Activated CD4-positive, alpha-beta T cell treated with anti-CD3 and anti-CD28 coated beads, Interleukin-2, amount 10 ng/mL, durations not matched to agents 24 days and 14 days (primary cell): ENCODE measurements at regions of chr2 and their contacts with region 1.

Region 1: GRCh38 chr2:9594366-9595054 is 36.3 kb downstream of the YWHAQ start:
- DNase-seq: no peak
- H3K4me3 Mint-ChIP-seq: peak overlapping the region; percentile 22
- H3K27ac Mint-ChIP-seq: peak overlapping the region; percentile 81
- H3K4me1 Mint-ChIP-seq: peaks cover 52% of the 10 kb centered on the region
- H3K27me3 Mint-ChIP-seq: no peaks in the 10 kb centered on the region

Region 2: DNA sequence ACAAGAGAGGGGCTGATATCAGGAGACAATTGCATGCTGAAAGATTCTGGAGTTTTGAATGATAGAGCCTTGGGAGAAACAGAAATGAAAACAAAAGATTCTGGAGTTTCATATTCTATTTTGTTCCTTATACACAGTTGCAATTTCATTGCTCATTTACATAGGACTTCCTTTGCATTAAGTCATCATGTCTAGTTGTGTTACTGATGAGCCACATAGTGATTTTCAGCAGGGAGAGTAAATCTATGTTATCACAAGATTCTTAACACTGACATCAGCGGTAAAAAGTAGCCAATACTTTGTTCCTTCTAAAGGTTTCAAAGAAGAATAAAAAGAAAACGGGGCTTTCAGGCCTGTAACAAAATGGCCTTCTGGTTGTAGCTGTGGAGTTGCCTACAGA is 46.0 kb before region 1 on chr2:
- intact Hi-C with region 1: loop called (anchors 1 kb)
- DNase-seq: no peak
- H3K4me3 Mint-ChIP-seq: peak overlapping the region; percentile 54
- H3K27ac Mint-ChIP-seq: peak overlapping the region; percentile 58
- H3K4me1 Mint-ChIP-seq: peaks cover 58% of the 10 kb centered on the region
- H3K27me3 Mint-ChIP-seq: no peaks in the 10 kb centered on the region

Region 3: DNA sequence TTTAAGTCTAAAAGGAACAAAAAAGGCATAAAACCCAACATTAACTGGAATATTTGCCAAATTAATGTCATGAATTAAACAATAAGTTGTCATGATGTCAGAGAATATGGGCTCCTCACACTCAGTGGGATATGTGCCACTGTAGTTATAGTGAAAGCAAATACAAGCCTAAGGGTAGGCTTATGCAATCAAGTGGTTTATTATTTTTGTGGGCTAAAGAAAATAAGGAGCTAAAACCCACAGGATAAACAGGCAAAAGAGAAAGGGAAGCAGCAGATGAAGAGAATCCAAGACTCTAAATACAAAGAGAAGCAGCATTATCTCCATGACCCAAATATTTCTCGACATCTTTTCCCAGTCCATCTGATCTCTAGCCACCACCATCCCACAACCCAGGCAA is 18.8 kb after region 1 on chr2:
- intact Hi-C with region 1: loop called (anchors 1 kb)
- DNase-seq: no peak
- H3K4me3 Mint-ChIP-seq: no peak overlapping the region
- H3K27ac Mint-ChIP-seq: no peak overlapping the region
- H3K4me1 Mint-ChIP-seq: peaks cover 77% of the 10 kb centered on the region
- H3K27me3 Mint-ChIP-seq: no peaks in the 10 kb centered on the region

Region 4: DNA sequence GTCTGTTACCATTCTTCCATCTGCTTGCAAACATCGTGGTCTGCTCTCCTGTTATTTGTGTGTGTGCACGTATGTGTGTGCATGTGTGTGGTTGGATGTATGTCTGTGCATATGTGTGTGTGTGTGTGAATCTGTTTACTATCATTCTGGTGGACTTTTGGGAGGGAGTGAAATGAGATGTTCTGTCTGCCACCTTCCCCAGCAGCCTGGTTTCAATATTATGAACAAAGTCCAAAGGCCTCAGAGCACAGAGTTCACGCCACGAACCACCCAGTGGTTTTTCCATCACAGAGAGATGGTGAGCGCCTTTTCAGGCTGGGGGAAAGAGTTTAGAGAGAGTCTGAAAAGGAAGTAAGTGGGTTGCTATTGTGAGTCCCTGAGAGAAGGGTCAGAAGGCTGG is 103.4 kb after region 1 on chr2:
- intact Hi-C with region 1: loop called (anchors 1 kb)
- DNase-seq: peak; percentile 67
- H3K4me3 Mint-ChIP-seq: peak overlapping the region; percentile 27
- H3K27ac Mint-ChIP-seq: peak overlapping the region; percentile 27
- H3K4me1 Mint-ChIP-seq: peaks cover 31% of the 10 kb centered on the region
- H3K27me3 Mint-ChIP-seq: peaks cover 2% of the 10 kb centered on the region

Region 5: DNA sequence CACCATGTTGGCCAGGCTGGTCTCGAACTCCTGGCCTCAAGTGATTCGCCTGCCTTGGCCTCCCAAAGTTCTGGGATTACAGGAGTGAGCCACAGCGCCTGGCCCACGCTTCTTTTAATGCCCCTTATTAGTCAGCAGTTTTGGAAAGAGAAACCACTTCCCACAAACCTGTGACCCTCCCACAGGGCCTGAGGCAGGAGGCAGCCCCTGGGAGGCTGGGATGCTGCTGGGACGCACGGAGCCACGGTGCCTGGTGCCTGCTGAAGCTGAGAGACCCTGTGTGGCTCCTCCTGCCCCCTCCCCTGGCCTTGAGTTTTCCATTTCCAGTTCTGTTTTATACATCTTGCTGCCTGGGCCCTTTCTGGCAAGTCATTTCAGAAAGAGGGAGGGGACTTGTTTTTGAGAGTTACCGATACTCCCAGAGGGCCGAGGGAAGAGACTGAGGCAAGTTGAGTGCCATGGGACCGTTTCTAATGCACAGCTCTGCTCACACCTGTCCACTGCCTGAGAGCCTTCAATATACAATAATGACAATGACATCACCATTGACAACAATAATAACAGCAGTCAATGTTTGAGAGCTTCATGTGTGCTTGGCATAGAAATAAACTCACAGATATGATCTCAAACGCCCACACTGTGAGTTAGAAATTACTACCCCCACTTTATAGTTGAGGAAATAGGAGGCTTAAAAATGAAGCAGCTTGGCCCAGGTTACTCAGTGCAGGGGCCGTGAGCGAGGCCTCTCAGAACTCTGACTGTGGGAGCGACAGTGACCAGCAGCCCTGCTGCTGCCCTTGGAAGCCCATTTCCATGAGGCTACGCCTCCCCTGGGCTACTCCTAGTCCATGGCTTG is 114.4 kb after region 1 on chr2:
- intact Hi-C with region 1: loop called (anchors 1 kb)
- DNase-seq: no peak
- H3K4me3 Mint-ChIP-seq: peak overlapping the region; percentile 17
- H3K27ac Mint-ChIP-seq: peak overlapping the region; percentile 91
- H3K4me1 Mint-ChIP-seq: peaks cover 51% of the 10 kb centered on the region
- H3K27me3 Mint-ChIP-seq: no peaks in the 10 kb centered on the region

Region 6: GRCh38 chr2:9753276-9753600 is 158.7 kb after region 1 on chr2:
- intact Hi-C with region 1: loop called (anchors 1 kb)
- DNase-seq: peak; percentile 83
- H3K4me3 Mint-ChIP-seq: peak overlapping the region; percentile 56
- H3K27ac Mint-ChIP-seq: peak overlapping the region; percentile 88
- H3K4me1 Mint-ChIP-seq: peaks cover 59% of the 10 kb centered on the region
- H3K27me3 Mint-ChIP-seq: peaks cover 32% of the 10 kb centered on the region

Region 7: DNA sequence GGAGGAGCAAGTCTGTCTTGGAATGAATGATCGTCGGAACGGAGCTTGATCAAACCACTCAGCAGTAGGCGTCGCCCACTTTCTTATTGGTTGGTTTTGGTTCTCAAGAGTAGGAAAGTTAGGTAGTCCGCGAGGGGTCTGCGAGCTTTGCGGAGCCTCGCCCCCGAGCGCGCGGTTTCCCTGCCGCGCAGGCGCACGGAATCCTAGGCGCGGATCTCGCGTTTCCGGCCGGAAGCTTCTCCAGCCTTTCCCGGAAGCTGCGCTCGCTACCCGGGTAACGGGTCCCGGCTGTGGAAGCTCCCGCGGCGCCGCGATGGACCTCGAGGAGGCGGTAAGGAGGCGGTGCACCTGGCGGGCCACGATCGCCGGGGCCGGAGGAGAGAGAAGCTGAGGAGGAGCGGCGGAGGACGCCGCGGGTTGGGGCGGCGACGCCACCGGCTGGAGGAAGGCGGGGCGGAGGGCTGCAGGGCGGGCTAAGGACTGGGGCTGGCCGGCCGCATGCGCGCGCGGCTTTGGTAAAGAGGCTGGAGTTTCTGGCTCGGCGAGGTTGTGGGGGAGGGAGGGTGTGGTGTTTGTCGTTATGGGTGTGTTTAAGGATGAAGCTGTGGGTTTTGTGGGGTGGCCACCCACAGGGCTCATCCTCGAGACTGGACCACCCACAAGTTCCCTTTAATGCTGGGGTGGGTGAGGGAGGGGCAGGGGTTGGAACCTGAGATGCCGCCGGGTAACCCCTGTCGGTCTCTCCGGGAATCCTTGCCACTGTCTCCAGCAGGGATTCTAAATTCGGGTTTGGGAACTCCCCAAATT is 248.9 kb after region 1 on chr2 and contains the start of gene TAF1B:
- intact Hi-C with region 1: no loop called
- DNase-seq: peak; percentile 97
- H3K4me3 Mint-ChIP-seq: peak within 1 kb of the TSS; percentile 92
- H3K27ac Mint-ChIP-seq: peak within 1 kb of the TSS; percentile 92
- H3K4me1 Mint-ChIP-seq: peaks cover 34% of the 10 kb centered on the region
- H3K27me3 Mint-ChIP-seq: no peaks in the 10 kb centered on the region
- total RNA-seq, gene TAF1B: 21.9 and 22.7 TPM in 2 replicates